Gastrocnemius medialis (tissue), 4 donors: ENCODE measurements at regions of chr6 and their contacts with region 1.

Region 1: DNA sequence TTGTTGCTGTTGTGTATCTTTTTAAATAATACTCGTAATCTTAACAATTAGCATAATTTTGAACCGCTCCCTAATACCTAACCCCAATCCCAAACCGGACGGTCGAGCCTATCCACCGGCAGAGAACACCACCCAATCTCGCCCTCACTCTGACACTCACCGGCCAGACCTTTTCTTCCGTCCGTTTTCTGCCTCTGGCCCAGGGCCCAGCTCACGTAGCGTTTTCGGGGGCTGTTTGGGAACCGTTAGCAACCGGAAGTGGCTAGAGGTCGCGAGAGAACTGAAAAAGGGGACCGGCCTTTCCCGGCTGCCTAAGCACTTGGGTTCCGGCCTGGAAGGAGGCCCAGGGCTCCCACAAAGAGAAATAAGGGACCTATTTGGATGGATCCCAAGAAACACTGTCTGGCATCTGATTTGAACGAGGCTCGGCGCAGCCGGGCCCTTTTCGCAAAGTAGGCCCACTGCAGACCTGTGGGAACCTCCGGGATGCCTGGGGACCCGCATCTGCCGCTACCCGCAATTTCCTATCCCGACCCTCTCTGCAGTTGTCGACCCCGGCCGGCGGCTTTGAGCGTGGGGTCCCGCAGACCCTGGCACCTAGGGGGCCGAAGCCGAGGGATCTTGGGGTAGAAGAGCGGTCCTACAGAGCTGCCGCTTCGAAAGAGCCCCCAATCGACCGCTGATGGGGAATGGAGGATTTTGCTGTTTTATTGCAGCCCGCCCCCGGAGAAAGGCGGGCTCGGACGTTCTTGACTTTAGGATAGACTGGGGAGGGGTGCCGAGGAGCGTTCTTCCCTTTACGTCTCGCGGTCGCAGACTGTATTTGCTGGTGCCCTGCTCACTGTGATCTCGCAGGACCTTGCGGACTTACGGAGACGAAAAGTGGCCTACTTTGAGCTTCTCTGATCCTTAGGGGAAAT is 4.8 kb upstream of the ZKSCAN8 start:
- DNase-seq: peak; percentile 78 to 91
- ATAC-seq: peak; percentile 90 to 93
- H3K4me3 ChIP-seq: peak overlapping the region; percentile 81 to 99 (median 98)
- H3K27ac ChIP-seq: peak overlapping the region; percentile 90 to 97 (median 92)
- H3K4me1 ChIP-seq: peaks cover 17 to 21% of the 10 kb centered on the region in 2 donors
- H3K27me3 ChIP-seq: no peaks in the 10 kb centered on the region
- CTCF ChIP-seq: no peak
- POLR2A ChIP-seq: peak in 1 of 2 donors; percentile 31

Region 2: DNA sequence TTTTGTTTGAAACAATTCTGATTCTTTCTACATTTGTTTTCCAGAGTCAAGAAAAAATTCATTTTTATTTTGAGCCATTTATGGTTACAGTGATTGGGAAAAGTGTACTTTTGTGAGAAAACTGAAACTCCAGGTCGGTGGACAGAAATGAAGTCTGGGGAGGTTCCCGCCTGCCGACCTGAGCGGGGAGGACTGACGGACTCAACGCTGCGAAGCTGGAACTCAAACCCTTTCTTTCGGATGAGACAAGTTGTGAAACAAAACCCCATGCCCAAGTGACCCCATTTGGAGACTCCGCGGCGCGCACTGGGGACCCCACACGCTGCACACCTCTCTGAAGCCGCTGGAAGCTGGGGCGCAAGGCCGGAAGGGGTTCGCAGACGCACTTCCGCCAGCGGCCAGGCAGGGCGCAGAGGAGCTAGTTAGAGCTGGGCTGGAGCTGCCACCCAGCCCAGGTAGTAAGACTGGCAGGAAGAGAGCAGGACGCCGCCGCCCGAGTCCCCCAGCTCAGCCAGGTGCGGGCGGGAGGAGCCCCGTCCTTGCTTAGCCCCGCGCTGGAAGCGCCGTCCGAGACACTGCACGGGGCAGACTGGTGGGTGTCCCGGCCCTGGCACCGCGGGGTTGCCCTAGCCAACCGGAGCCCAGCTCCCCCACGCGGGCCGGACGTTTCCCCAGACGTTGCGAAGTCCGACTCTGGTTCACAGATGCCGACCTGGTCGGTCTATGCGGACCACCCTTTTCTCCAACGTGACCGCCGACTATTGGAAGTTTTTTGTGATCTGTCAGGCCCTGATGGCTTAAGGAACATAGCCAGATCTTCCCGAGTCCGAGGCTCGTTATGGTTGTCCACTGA is 32.2 kb before region 1 on chr6:
- in situ Hi-C with region 1: no loop called
- intact Hi-C with region 1: loop called (anchors 5 kb)
- DNase-seq: peak; percentile 35 to 63
- ATAC-seq: peak; percentile 97 to 99
- H3K4me3 ChIP-seq: peak overlapping the region; percentile 62 to 94 (median 82)
- H3K27ac ChIP-seq: peak overlapping the region; percentile 68 to 82 (median 74)
- H3K4me1 ChIP-seq: peaks cover 0 to 3% of the 10 kb centered on the region in 2 donors
- H3K27me3 ChIP-seq: no peaks in the 10 kb centered on the region
- CTCF ChIP-seq: peak; percentile 38 to 76 (median 60)
- POLR2A ChIP-seq: peak in 1 of 2 donors; percentile 32

Region 3: DNA sequence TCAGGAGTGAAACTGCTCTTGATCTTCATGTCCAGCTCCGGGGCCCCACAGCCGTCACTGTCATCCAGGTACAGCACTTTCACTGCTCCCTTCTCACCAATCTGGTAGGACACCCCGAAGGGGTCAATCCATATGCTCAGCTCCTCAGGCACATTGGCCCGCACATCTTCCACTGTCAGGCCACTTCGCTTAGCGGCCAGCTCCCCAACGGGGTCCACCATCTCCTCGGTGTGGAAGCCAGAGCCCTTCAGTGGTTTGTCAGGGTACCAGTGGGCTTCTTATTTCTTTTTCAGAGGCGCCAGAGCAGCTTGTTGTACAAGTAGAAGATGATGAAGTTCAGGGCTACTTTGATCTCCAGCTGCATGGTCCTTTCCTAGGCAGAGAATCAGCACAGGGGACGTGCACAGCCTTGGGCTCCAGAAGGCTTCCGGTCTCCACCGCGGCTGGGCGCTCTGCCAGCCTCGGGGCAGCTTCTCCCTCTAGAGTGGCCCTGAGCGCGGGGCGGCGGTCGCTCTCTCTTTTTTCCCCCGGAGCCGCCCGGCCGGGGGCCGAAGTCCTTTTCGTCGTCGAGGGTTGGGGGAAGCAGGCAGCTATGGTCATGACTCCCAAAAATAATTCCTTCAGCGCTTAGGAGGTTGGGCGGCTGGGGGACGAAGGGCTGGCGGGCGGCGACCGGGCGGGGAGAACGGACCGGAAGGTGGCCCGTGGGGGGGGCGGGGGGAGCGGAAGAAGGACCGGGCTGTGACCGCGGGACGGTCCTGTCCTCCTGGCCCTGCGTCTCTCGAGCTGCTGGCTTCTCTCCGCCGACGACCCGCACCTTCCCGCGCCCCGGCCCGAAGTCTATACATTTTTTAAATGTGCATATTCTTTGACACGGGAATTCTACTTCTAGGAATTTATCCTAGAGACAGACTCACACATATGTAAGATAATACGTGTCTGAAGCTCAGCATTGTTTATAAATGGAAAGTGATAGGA is 81.7 kb after region 1 on chr6:
- in situ Hi-C with region 1: loop called in 2 of 4 experiments (anchors 10 kb)
- intact Hi-C with region 1: no loop called
- DNase-seq: peak; percentile 58 to 76
- ATAC-seq: peak; percentile 92 to 95
- H3K4me3 ChIP-seq: peak overlapping the region; percentile 65 to 82 (median 76)
- H3K27ac ChIP-seq: peak overlapping the region; percentile 81 to 89 (median 84)
- H3K4me1 ChIP-seq: peaks cover 8 to 22% of the 10 kb centered on the region in 2 donors
- H3K27me3 ChIP-seq: peaks cover 12 to 35% (median 16%) of the 10 kb centered on the region in 3 donors
- CTCF ChIP-seq: no peak
- POLR2A ChIP-seq: peak in 1 of 2 donors; percentile 20

Region 4: DNA sequence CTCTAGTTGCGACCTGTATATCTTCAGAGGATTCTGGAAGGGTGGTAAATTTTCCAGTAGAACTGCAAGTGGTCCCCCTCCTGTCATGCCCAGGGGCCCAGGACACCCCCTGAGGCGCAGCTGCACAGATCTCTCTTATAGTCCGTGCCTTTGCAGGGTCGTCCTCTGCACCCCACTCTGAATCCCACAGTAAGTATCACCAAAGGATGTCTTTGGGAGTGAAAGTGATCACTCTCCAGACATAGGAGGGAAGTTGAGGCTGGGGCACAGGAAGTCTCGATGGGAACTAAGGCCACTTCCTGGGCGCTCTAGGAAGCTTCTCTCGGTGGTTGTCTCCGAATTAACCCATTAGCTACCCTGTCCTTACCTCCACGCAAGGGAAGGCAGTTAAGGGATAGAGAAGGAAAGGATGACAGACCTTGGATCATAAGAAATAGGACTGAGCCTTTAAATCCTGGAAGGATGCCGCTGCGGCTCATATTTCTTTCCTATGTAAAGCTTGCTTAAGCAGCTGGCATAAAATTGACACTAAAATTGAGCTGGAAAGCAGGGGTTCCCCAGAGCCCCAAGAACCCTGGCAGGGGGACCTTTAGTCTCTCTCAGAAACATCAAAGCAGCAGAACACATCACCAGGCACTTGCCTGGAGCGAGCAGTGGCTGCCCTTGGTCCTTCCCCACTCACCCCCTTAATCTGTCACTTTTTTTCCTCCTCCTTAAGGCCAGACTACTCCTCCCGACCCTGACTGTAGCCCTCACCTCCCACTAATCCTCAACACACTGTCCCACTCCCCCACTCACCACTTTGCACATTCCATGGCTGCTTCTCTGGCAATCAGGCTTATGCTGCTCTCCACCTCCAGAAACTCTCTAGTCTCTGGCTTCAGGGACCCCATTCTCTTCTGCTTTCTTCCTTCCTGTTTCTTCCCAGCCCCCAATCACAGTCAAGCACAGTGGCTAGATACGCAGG is 115.4 kb after region 1 on chr6 and contains the start of gene ZKSCAN4:
- in situ Hi-C with region 1: loop called in 1 of 4 experiments (anchors 25 kb)
- intact Hi-C with region 1: loop called (anchors 1 kb)
- DNase-seq: peak; percentile 57 to 67
- ATAC-seq: peak; percentile 99 to 100
- H3K4me3 ChIP-seq: peak within 1 kb of the TSS; percentile 72 to 94 (median 90)
- H3K27ac ChIP-seq: peak within 1 kb of the TSS; percentile 44 to 53 (median 49)
- H3K4me1 ChIP-seq: peaks cover 9 to 15% of the 10 kb centered on the region in 2 donors
- H3K27me3 ChIP-seq: peaks cover 0 to 3% (median 0%) of the 10 kb centered on the region in 3 donors
- CTCF ChIP-seq: no peak
- POLR2A ChIP-seq: no peak
- total RNA-seq, gene ZKSCAN4: 0.82 to 3.3 (median 1.1) TPM

Region 5: DNA sequence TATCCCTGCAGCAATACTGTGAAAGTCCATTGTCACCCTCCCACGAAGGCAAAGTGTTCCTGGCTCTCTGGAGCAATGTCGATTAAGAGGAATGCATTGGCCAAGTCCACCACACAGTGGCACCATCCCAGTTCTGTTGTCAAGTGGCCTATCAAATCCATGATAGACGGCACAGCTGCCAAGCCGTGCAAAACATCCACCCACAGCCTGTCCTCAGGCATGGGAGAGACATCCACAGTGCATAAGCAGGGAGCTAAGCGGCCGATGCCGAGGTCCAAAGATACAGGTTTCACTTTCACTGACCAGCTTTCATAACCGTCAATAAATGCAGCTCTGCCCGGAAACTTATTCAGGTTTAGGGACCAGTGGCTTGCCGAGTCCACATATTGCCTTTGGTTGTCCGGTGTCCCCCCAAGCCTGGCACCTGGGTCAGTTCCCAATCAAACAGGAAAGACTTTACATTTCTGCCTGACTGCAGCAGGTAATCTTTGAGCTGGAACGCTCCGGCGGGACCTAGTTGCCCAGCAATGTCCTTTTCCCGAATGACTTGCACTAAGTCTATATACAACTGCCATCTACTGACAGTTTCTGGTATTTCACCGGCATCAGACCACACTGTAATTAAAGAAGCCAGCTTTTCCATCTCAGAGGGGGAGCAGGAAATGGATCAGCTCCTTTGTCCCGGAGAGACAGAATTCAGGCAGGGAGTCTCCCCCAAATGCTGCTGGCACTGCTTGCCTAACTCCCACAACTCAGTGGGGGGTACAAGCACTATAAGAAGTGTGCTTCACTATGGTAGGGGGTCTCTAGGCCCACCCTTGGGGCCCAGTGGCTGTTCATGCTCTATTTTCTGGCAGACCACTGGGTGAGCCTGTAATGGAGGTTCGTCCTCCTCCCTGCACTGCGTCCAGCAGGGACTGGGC is 219.2 kb after region 1 on chr6:
- in situ Hi-C with region 1: loop called (anchors 10 kb)
- intact Hi-C with region 1: loop called (anchors 2 kb)
- DNase-seq: peak; percentile 63 to 65
- ATAC-seq: peak; percentile 93 to 95
- H3K4me3 ChIP-seq: peak overlapping the region; percentile 60 to 75 (median 74)
- H3K27ac ChIP-seq: peak overlapping the region; percentile 76 to 83 (median 82)
- H3K4me1 ChIP-seq: peaks cover 27 to 44% of the 10 kb centered on the region in 2 donors
- H3K27me3 ChIP-seq: no peaks in the 10 kb centered on the region
- CTCF ChIP-seq: peak; percentile 79 to 91 (median 88)
- POLR2A ChIP-seq: no peak

Region 6: DNA sequence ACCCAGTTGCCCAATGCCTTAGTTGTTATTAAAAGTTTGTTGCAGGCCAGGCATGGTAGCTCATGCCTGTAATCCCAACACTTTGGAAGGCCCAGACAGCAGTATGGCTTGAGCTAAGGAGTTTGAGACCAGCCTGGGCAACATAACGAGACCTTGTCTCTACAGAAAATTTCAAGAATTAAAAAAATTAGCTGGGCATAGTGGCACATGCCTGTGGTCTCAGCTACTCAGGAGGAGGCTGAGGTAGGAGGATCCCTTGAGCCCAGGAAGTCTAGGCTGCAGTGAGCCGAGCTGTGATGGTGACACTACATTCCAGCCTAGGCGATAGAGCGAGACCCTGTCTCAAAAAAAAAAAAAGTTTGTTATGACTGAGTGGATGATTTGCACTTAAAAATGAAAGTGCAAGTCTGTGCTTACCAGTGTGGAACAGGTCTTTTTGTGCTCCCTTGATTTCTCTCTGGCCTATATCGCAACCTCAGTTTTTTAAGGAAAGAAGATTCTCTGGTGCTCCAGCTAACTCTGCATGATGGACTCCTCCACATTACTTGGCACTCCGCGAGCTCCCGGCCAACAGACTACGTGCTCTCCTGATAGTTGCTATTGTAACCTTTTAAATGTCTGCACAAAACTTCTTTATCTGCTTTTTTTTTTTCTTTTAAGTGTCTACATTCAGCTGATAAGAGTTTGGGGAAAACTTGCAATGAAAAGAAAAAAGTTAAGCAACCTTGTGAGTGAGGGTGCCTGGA is 235.0 kb after region 1 on chr6:
- in situ Hi-C with region 1: no loop called
- intact Hi-C with region 1: no loop called
- DNase-seq: no peak
- ATAC-seq: no peak
- H3K4me3 ChIP-seq: no peak overlapping the region
- H3K27ac ChIP-seq: no peak overlapping the region
- H3K4me1 ChIP-seq: no peaks in the 10 kb centered on the region
- H3K27me3 ChIP-seq: no peaks in the 10 kb centered on the region
- CTCF ChIP-seq: no peak
- POLR2A ChIP-seq: no peak